Activated T-helper 2 cell treated with anti-CD3 and anti-CD28 coated beads, Interferon-gamma antibody, Interleukin-2, Interleukin-4, amounts not matched to agents 10 μg/mL and 5 μg/mL and 100 μg/mL, durations not matched to agents 14 hours and 24 hours and 36 hours (primary cell): ENCODE measurements at regions of chr13 and their contacts with region 1.

Region 1: DNA sequence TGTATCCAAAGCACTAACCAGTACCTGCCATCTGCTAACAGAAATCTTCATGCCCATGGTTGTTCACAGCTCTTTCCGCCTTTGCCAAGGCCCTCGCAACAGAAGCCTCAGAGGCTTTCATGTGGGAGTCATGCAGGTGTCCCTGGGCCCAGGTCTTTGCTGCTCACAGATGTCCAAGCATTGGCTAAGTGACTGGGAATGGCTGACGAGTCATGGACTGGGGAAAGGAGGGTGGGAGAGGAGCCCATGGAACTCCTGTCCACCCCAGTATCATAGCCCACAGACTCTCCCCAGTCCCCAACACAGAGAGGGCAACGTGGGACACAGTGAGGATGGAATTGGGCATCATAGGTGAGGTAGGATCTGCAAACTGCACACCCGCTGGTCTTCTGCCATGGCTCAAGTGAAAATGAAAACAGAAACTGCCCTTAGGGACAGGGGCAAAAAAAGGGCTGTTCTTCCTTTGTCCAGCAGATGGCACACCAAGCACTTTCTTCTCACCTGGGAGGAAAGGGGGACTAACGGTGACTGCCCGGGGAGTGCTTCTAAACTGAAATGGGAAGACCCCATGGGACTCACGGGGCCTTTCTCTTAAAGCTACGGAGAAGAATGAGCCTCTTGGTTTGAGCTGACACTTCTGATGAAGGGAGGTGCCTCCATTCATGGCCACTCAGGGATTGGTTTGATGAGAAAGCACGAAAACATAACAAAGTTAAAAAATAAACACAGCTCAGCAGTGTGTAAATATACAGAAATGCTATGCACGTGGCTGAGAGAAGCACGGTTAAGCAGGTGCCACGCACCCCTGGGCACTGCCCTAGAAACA is 11.1 kb upstream of the DHRS12 start:
- DNase-seq: peak; percentile 69
- H3K4me3 Mint-ChIP-seq: no peak overlapping the region
- H3K27ac Mint-ChIP-seq: no peak overlapping the region
- H3K4me1 Mint-ChIP-seq: peaks cover 39% of the 10 kb centered on the region
- H3K27me3 Mint-ChIP-seq: peaks cover 16% of the 10 kb centered on the region

Region 2: DNA sequence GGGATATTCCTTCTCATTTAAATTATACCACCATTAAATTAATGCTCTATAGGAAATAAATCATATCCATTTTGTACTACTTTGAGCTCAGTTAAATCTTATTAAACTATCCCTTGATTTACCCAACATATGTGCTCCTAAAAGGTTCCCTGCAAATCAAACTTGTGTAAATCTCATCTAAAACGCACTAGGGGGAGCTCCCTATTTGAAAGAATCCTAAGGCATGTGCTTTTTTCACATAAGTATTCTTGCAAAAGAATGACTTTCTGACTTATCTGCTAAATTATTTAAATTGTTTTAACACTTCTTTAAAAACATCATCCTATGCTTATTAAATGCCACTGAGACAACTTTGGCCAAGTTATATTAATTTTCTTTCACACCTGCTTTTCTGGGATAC is 370.1 kb before region 1 on chr13:
- intact Hi-C with region 1: no loop called
- DNase-seq: no peak
- H3K4me3 Mint-ChIP-seq: no peak overlapping the region
- H3K27ac Mint-ChIP-seq: no peak overlapping the region
- H3K4me1 Mint-ChIP-seq: peaks cover 8% of the 10 kb centered on the region
- H3K27me3 Mint-ChIP-seq: no peaks in the 10 kb centered on the region

Region 3: DNA sequence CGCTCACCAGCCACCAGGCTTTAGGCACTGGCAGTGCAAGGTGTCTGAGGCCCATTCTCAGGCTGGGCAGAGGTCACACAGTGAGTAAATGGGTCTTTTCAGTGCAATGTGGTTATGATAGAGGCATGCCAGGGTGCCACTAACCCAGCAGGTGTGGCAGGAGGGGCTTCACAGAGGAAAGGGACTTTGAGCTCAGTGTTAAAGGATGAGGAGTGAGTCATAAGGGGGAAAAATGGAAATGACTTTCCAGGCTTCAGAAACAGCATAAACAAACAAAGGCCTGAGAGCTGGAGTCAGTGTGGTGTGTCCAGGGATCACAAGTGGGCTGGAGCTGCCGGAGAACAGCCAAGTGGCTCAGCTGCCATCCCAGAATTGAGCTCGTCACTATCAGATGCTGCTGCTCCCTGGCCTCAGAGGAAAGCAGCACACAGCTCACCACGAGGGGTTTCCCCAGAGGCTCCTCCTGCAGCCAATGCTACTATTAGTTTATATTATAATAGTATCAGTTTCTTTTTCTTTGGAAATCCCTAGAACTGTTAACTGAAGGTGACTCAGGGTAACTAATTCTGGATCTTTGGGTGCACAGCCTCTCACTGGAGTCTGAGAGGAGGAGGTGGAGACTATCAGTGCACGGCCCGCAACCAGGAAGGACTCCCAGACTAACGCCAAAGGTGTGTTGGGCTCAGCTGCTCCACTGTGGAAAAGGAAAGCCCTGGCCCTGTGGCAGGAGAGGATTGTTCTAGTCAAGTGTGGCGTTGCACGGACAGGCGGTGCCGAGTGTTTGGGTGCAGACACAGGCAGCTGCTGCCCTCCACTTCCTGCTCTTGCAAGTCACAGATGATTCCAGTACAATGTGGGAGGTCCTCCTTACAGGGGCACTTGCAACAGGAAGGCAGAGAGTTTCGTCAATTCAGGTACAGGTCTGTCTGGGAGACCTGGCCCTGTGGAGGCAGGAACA is 50.6 kb before region 1 on chr13:
- intact Hi-C with region 1: no loop called
- DNase-seq: peak; percentile 47
- H3K4me3 Mint-ChIP-seq: peak overlapping the region; percentile 75
- H3K27ac Mint-ChIP-seq: peak overlapping the region; percentile 95
- H3K4me1 Mint-ChIP-seq: peaks cover 30% of the 10 kb centered on the region
- H3K27me3 Mint-ChIP-seq: no peaks in the 10 kb centered on the region

Region 4: DNA sequence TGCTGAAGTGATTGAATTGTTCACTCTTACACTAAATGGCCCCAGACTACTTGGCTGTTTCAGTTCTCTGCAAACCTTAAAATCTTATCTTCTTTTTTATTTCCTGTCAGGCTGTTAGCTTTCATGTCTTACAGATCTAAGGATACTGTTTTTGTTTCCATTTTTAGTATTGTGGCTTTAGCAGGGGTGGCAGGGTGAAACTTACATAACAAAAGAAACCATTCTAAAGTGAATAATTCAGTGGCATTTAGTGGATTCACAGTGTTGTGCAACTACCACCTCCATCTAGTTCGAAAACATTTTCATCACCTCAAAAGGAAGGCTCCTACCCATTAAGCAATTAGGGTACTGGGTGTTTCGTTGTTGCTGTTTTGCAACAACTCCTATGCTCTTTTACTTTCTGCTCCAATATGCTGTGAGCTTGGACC is 10.1 kb after region 1 on chr13:
- intact Hi-C with region 1: loop called (anchors 1 kb)
- DNase-seq: no peak
- H3K4me3 Mint-ChIP-seq: peak overlapping the region; percentile 32
- H3K27ac Mint-ChIP-seq: peak overlapping the region; percentile 33
- H3K4me1 Mint-ChIP-seq: peaks cover 69% of the 10 kb centered on the region
- H3K27me3 Mint-ChIP-seq: peaks cover 53% of the 10 kb centered on the region

Region 5: GRCh38 chr13:51832471-51833152 is 17.6 kb after region 1 on chr13:
- intact Hi-C with region 1: loop called (anchors 1 kb)
- DNase-seq: no peak
- H3K4me3 Mint-ChIP-seq: no peak overlapping the region
- H3K27ac Mint-ChIP-seq: no peak overlapping the region
- H3K4me1 Mint-ChIP-seq: peaks cover 15% of the 10 kb centered on the region
- H3K27me3 Mint-ChIP-seq: peaks cover 54% of the 10 kb centered on the region

Region 6: GRCh38 chr13:51844862-51845573 is 30.0 kb after region 1 on chr13 and contains the start of gene TMEM272:
- intact Hi-C with region 1: loop called (anchors 5 kb)
- DNase-seq: peak; percentile 26
- H3K4me3 Mint-ChIP-seq: peak within 1 kb of the TSS; percentile 20
- H3K27ac Mint-ChIP-seq: no peak within 1 kb of the TSS
- H3K4me1 Mint-ChIP-seq: peaks cover 10% of the 10 kb centered on the region
- H3K27me3 Mint-ChIP-seq: peaks cover 25% of the 10 kb centered on the region
- total RNA-seq, gene TMEM272: 0.18 TPM in 1 of 2 replicates, not detected in the other

Region 7: GRCh38 chr13:51856027-51856736 is 41.1 kb after region 1 on chr13:
- intact Hi-C with region 1: no loop called
- DNase-seq: no peak
- H3K4me3 Mint-ChIP-seq: no peak overlapping the region
- H3K27ac Mint-ChIP-seq: no peak overlapping the region
- H3K4me1 Mint-ChIP-seq: peaks cover 2% of the 10 kb centered on the region
- H3K27me3 Mint-ChIP-seq: peaks cover 36% of the 10 kb centered on the region

Region 8: DNA sequence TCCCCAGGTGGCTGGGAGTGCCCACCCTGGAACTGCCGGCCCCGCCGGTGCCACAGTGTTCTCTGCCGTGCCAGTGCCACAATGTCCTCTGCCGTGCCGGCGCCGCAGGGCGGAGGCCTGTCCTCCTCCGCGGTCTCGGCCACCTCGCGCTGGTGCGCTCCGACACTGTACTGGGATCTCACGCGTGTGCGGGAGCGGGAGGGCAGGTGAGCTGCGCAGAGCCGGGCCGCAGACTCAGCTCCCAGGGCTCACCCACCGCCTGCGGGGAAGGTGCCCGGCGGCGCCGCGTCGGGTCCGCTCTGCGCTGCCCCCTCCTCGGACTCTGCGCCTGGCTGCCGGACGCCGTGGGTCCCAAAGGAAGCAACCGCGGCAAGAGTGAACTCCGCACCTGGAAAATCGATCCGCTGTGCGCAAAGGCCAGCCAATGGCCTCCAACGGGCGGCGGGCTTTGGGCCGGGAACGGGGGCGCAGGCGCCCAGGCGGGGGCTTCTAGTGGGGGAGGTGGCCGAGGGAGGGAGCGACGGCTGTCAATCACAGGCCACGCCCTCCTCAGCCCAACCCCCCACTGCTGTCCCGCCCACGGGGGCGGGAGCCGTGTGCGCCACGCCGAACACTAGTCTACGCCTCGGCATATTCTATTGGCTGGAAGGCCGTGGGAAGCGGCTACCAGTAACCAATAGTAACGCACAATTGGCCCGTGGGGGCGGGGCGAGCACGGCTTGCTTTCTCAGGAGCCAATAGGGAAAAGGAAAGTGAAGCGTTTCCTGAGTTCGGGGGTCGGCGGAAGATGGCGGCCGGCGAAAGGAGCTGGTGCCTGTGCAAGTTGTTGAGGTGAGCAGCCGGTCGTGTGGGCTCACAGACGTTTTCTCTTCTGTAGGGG is 196.8 kb after region 1 on chr13 and contains the start of gene ALG11:
- intact Hi-C with region 1: loop called (anchors 5 kb)
- DNase-seq: peak; percentile 99
- H3K4me3 Mint-ChIP-seq: peak within 1 kb of the TSS; percentile 94
- H3K27ac Mint-ChIP-seq: peak within 1 kb of the TSS; percentile 86
- H3K4me1 Mint-ChIP-seq: peaks cover 9% of the 10 kb centered on the region
- H3K27me3 Mint-ChIP-seq: peaks cover 35% of the 10 kb centered on the region
- total RNA-seq, gene ALG11: 21.5 and 21.9 TPM in 2 replicates

Region 9: DNA sequence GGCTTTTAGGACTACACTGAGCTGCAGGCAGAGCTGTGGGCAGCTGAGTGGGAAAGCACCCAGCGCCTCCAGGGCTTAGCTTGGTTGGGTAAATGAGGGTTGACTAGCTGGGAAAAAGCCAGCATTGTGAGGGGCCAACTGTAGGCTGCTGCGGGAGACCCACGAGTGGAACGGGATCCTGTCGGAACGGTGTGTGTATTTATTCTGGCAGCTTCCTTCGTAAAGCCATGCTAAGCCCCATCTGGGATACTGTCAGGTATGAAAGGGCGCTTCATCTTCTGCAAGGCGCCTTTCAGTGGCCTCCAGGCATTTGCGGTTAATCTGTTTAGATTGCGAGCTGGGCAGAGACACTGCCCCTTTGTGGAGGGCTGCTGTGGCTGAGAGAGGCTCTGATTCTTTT is 964.1 kb after region 1 on chr13:
- intact Hi-C with region 1: no loop called
- DNase-seq: no peak
- H3K4me3 Mint-ChIP-seq: no peak overlapping the region
- H3K27ac Mint-ChIP-seq: no peak overlapping the region
- H3K4me1 Mint-ChIP-seq: no peaks in the 10 kb centered on the region
- H3K27me3 Mint-ChIP-seq: peaks cover 4% of the 10 kb centered on the region